A549 (cell line): ENCODE measurements at regions of chr2 and their contacts with region 1.

Region 1: GRCh38 chr2:74458132-74458925 is at the start of gene WBP1:
- DNase-seq: peak; percentile 99 to 100
- ATAC-seq: peak; percentile 80 to 92
- H3K4me3 ChIP-seq: peak within 1 kb of the TSS; percentile 70
- H3K27ac ChIP-seq: peak within 1 kb of the TSS; percentile 87 to 92
- H3K4me1 ChIP-seq: peaks cover 25% of the 10 kb centered on the region
- CTCF ChIP-seq: no peak
- EP300 ChIP-seq: no peak
- POLR2A ChIP-seq: peak; percentile 49
- RAD21 ChIP-seq: no peak
- polyA plus RNA-seq, gene WBP1: 62.6 and 86.3 TPM in 2 replicates

Region 2: DNA sequence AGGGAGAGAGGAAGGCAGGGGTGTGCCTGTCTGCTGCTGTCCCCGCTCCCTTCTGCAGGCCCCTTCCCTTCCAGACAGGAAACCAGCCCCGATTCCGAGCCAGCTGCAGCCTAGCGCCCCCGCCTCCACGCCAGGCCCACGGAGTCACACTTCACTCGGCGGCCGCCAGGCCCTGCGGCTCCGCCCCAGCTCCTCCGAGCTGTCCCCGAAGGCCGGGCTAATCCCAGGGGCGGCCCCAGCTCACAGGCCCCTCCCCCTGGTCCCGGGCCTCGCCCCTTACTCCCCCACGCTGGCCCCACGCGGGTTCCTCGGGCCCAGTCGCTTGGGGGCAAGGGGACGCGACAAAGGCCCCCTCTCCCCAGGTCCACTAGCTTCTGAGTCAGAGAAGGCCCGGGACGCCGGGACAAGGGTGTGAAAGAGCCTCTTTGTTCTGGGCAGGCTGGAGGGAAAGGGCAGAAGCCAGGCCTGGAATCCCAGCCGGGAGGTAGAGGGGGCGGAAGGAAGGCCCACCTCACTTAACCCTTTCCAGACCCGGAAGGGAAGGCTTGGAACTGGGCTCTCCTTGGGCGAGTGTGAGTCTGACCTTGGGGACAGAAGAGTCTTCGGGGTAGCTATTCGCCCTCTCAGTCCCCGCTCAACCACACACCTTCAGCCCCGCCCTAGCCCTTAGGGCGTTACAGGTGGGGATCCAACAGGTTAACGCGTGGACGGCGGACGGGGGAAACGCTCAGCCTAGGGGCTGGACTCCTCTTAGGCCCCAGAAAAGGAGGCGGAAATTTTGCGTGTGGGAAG is 17.8 kb before region 1 on chr2:
- CTCF ChIA-PET with region 1: interaction called, 8 read pairs
- POLR2A ChIA-PET with region 1: interaction called, 23 read pairs
- DNase-seq: peak; percentile 85 to 100
- ATAC-seq: peak; percentile 96 to 99
- H3K4me3 ChIP-seq: peak overlapping the region; percentile 53
- H3K27ac ChIP-seq: peak overlapping the region; percentile 86 to 89
- H3K4me1 ChIP-seq: peaks cover 34% of the 10 kb centered on the region
- CTCF ChIP-seq: no peak
- EP300 ChIP-seq: no peak
- POLR2A ChIP-seq: peak; percentile 94
- RAD21 ChIP-seq: no peak

Region 3: DNA sequence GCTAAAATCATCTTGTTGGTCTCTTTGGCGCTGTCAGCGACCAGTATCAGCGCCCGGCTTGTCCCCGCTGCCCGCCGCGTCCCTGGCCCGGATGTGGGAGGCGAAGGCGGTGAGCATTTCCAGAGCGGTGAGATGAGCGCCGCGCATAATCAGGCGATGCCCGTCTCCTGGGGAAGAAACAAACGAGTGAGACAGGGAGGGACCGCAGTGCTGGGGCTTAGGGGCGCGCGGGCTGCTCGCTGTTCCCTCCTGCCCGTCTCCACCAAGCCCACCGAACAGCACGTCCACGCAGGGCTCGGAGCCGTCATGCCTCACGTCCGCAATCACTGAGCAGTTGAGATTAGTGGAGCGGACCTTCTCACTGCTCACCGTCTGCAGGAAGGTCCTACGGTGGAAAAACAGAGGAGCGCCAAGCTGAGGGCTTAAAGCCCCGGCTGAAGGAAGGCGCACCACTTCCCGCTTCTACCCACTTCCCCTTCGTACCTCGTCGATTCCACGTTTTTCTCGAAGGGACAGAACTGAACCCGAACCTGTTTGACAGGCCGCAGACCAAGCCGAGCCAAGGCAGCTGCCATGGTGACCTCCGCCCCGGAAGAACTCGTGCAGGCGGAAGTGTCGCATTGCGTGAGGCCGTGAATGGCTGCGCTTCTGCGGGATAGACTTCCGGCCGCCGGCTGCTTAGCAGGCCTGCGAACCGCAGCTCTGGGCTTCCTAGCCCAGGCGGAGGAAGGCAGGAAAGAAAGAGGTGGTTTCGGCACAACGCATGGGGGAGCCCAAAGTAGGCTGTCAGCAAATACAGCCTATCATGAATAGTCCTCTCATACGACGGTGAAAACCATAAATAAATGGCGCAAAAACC is 14.0 kb after region 1 on chr2 and contains the start of gene MRPL53:
- CTCF ChIA-PET with region 1: interaction called, 10 read pairs
- POLR2A ChIA-PET with region 1: interaction called, 37 read pairs
- DNase-seq: peak; percentile 70 to 98
- ATAC-seq: peak; percentile 93 to 94
- H3K4me3 ChIP-seq: peak within 1 kb of the TSS; percentile 63
- H3K27ac ChIP-seq: peak within 1 kb of the TSS; percentile 86 to 91
- H3K4me1 ChIP-seq: peaks cover 16% of the 10 kb centered on the region
- CTCF ChIP-seq: no peak
- EP300 ChIP-seq: no peak
- POLR2A ChIP-seq: peak; percentile 94
- RAD21 ChIP-seq: no peak
- polyA plus RNA-seq, gene MRPL53: 49.9 and 68.8 TPM in 2 replicates